ENCODE measurements at regions of chr6 and their contacts with region 1.

Region 1: DNA sequence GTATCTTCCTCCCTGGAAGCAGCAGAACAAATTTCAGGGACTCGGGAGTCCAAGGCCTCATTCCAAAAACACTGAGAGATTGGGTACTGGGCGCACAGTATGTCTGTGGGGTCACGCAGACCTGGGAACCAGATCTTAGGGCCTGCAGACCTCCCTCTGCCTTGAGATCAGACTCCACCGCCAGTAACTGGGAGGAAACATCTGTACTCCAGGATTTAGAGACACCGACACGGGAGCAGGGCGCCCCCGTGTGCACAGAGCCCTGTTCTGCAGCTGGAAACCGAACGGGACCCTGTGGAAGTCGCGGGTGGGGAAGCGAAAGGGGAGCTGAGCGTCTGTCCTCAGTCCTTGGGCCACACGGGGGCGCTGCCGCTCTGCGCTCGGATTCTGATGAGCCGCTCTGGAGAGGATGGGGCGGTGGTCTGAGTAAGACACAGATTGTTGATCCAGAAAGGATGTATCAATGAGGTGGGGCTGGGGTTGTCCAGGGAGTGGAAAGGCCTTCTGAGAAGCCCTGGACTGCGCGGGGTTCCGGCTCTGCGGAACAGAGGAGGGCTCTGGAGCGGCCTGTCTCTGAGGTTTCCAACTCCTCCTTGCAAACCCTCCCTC is 35.7 kb upstream of the HLA-E start:
- DNase-seq: peak; percentile 89
- ATAC-seq: peak; percentile 86
- H3K4me3 Mint-ChIP-seq: no peak overlapping the region
- H3K27ac Mint-ChIP-seq: no peak overlapping the region
- H3K4me1 Mint-ChIP-seq: peaks cover 29% of the 10 kb centered on the region
- H3K27me3 Mint-ChIP-seq: peaks cover 84% of the 10 kb centered on the region

Region 2: DNA sequence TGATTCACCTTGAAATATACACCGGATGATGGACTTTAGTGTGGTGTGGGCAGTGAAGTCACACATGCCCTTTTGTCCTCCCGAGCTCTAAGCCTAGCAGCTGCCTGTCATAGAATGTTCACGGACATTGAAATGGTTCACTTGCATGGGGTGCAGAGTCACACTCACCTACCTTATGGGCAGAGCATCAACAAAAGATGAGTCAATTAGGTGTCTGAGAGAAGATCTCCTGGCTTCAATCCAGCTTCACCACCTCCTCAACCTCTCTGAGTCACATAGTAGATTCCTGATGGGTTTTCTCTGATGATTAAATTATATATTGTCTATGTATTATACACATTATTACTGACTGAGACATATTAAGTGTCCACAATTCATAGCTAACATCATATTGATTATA is 12.4 kb before region 1 on chr6:
- CTCF ChIA-PET with region 1: interaction called, 14 read pairs
- POLR2A ChIA-PET with region 1: no interaction called
- DNase-seq: no peak
- ATAC-seq: no peak
- H3K4me3 Mint-ChIP-seq: no peak overlapping the region
- H3K27ac Mint-ChIP-seq: no peak overlapping the region
- H3K4me1 Mint-ChIP-seq: no peaks in the 10 kb centered on the region
- H3K27me3 Mint-ChIP-seq: peaks cover 76% of the 10 kb centered on the region

Region 3: DNA sequence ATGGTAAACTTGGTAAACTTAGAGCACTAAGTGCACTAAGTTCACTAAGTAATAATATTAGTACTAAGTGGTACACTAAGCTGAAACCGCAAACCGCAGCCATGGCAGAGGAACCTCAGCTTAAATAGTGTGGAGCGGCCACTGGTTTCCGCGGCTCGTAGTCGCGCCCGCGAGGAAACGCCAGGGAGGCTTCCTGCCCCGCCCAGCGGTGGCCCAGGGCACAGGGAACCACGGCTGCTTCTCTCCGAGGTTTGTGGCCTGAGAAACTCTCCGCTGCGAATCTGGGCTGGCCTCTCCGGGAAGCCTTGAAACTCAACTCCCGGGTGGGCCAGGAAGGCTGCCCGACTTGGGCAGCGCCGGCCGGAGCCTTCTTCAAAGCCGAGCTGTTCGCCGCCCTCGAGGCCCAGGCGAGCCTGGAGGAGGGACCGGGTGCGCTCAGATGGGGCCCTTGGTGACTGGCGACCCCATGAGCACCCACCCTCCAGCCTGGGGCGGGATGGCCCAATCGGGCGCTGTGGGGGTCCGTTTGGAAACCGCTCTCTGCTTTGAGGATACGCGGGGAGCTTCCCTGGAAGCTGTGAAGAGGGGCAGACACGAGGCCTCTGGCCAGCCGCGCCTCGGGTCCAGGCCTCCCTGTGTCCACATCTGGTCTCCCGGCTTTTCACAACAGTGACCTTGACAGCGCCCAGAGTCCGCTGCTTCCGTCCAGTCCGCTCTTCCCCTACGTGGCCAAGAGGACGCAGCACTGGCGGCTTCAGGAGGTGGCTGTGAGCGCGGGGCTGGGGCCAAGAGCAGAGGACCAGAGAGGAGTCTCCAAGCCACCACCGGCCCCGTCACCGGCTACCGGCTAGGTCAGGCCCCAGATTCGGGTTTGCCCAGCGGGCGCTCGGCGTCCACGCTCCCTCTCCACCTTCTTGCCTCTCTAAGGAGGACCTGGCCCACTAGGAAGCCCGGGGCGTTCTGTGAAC is 10.3 kb after region 1 on chr6:
- CTCF ChIA-PET with region 1: interaction called, 44 read pairs
- POLR2A ChIA-PET with region 1: interaction called, 3 read pairs
- DNase-seq: peak; percentile 78
- ATAC-seq: peak; percentile 64
- H3K4me3 Mint-ChIP-seq: no peak overlapping the region
- H3K27ac Mint-ChIP-seq: no peak overlapping the region
- H3K4me1 Mint-ChIP-seq: peaks cover 29% of the 10 kb centered on the region
- H3K27me3 Mint-ChIP-seq: peaks cover 80% of the 10 kb centered on the region

Region 4: DNA sequence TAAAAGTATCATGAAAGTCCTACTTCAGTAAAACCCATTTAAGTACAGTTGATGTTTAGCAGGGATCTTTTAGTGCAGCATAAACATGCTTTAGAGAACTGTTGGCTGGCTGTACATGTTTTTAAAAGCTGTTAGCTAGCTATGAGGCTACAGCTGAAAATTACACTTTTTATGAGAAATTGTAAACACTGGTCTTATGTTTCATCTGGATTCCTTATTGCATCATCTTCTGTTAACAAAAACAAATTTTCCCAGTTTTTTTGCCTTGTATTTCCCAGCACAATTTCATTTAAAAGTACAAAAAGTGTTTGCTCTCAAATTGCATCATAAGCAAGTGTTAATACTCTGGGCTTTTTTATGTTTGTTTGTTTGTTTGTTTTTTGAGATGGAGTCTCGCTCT is 17.4 kb after region 1 on chr6:
- CTCF ChIA-PET with region 1: interaction called, 44 read pairs
- POLR2A ChIA-PET with region 1: interaction called, 3 read pairs
- DNase-seq: no peak
- ATAC-seq: no peak
- H3K4me3 Mint-ChIP-seq: no peak overlapping the region
- H3K27ac Mint-ChIP-seq: no peak overlapping the region
- H3K4me1 Mint-ChIP-seq: peaks cover 9% of the 10 kb centered on the region
- H3K27me3 Mint-ChIP-seq: peaks cover 65% of the 10 kb centered on the region

Region 5: GRCh38 chr6:30590994-30591393 is 137.4 kb after region 1 on chr6:
- CTCF ChIA-PET with region 1: interaction called, 12 read pairs
- POLR2A ChIA-PET with region 1: no interaction called
- DNase-seq: no peak
- ATAC-seq: no peak
- H3K4me3 Mint-ChIP-seq: no peak overlapping the region
- H3K27ac Mint-ChIP-seq: no peak overlapping the region
- H3K4me1 Mint-ChIP-seq: peaks cover 2% of the 10 kb centered on the region
- H3K27me3 Mint-ChIP-seq: no peaks in the 10 kb centered on the region

Region 6: DNA sequence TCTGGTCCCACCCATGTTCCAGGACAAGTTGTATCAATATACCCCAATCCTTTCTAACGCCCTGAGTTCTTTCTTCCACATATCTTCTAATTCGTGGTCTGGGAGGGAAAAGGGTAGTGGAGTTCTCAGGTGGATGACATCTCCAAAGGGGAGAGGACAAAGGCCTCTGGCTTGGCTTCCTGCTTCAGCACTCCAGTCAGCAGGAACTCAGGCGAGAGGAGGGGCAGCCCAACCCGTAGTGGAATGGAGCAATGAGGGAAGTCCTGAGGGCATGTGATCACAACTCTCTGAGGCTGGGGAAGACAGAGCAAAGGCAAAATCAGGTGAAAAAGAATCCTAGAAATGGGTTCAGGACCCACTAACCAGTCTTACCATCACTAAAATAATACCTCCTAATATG is 246.7 kb after region 1 on chr6:
- CTCF ChIA-PET with region 1: no interaction called
- POLR2A ChIA-PET with region 1: no interaction called
- DNase-seq: no peak
- ATAC-seq: no peak
- H3K4me3 Mint-ChIP-seq: no peak overlapping the region
- H3K27ac Mint-ChIP-seq: no peak overlapping the region
- H3K4me1 Mint-ChIP-seq: no peaks in the 10 kb centered on the region
- H3K27me3 Mint-ChIP-seq: no peaks in the 10 kb centered on the region

Measured in activated CD8-positive, alpha-beta T cell treated with anti-CD3 and anti-CD28 coated beads, Interleukin-2, amount 10 ng/mL, durations not matched to agents 7 days and 5 days (primary cell).